Activated B cell treated with CpG ODN at 0.5 μM for 24 hours (primary cell): ENCODE measurements at regions of chr2 and their contacts with region 1.

Region 1: DNA sequence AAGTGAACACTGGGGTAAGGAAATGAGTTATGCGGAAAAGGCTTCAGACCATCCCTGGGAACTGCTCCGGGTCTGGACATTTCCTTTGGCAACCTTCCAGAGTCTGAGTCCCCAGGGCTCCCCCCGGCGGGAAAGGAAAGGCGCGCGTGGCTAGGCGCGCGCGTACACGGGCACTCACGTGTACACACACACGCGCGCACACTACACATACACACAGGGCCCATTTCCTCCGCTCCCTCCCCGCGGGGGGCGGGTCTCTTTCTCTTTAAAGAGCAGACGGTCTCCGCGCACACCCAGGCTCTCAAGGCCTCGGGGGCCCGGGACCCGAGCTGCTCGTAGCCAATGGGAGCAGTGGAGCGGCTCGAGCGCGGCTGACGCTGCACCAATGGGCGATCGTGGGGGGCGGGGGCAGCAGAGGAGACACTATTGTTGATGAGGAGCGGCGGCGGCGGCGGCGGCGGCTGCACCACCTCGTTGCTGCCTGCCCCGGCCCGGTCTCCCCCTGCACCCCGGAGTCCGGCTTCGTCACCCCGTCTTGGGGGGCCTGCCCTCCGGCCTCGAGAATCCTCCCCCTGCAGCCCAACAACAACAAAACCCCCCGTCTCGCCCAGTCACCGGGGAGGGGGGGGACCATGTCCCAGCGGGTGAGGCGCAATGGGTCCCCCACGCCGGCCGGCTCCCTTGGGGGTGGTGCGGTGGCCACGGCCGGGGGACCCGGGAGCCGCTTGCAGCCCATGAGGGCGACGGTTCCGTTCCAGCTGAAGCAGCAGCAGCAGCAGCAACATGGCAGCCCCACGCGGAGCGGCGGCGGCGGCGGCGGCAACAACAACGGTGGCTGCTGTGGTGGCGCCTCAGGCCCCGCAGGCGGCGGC is at the start of gene FAM117B:
- DNase-seq: peak; percentile 92
- ATAC-seq: peak; percentile 88
- H3K4me3 Mint-ChIP-seq: peak within 1 kb of the TSS; percentile 95
- H3K27ac Mint-ChIP-seq: peak within 1 kb of the TSS; percentile 100
- H3K4me1 Mint-ChIP-seq: peaks cover 53% of the 10 kb centered on the region
- H3K27me3 Mint-ChIP-seq: no peaks in the 10 kb centered on the region
- CTCF ChIP-seq: no peak
- total RNA-seq, gene FAM117B: 21.3 and 22.5 TPM in 2 replicates

Region 2: DNA sequence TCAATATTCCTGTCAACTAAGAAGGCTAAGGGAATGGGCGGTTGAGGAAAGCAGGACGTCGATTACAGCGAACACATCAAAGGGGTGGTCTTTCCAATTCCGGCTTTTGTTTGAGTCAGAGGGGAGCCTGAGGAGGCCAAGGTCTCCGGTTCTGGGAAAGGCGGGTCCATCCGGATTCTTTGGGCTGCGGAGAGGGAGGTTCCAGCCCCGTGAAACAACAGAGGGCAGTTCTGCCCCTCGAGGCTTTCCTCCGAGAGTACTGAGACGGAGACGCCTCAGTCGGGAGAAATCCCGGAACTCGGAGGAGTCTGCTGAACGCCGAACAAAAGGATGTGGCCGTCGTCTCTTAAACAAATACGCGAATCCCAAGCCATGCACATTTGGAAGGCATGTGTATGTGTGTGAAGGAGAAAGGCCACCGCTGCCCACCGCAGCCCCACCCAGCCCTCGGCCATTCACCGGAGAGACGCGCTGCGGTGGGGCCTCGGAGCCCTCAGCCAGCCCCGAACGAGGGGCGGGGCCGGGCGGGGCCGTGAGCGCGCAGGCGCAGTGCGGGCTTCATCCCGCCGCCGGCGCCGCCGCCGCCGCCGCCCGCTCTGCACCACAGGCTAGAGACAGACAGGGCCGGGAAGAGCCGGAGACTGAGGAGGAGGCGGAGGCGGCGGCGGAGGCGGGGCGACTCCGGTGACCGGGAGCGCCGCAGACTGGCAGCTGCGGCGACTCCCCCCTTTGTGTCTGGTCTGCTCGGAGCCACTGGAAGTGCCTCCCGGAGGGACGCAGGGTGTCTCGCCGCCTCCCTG is 259.0 kb before region 1 on chr2 and contains the start of gene BMPR2:
- CTCF ChIA-PET with region 1: no interaction called
- POLR2A ChIA-PET with region 1: no interaction called
- intact Hi-C with region 1: loop called (anchors 1 kb)
- DNase-seq: peak; percentile 88
- ATAC-seq: peak; percentile 79
- H3K4me3 Mint-ChIP-seq: peak within 1 kb of the TSS; percentile 98
- H3K27ac Mint-ChIP-seq: peak within 1 kb of the TSS; percentile 87
- H3K4me1 Mint-ChIP-seq: peaks cover 24% of the 10 kb centered on the region
- H3K27me3 Mint-ChIP-seq: no peaks in the 10 kb centered on the region
- CTCF ChIP-seq: no peak
- total RNA-seq, gene BMPR2: 16.5 and 16.8 TPM in 2 replicates

Region 3: DNA sequence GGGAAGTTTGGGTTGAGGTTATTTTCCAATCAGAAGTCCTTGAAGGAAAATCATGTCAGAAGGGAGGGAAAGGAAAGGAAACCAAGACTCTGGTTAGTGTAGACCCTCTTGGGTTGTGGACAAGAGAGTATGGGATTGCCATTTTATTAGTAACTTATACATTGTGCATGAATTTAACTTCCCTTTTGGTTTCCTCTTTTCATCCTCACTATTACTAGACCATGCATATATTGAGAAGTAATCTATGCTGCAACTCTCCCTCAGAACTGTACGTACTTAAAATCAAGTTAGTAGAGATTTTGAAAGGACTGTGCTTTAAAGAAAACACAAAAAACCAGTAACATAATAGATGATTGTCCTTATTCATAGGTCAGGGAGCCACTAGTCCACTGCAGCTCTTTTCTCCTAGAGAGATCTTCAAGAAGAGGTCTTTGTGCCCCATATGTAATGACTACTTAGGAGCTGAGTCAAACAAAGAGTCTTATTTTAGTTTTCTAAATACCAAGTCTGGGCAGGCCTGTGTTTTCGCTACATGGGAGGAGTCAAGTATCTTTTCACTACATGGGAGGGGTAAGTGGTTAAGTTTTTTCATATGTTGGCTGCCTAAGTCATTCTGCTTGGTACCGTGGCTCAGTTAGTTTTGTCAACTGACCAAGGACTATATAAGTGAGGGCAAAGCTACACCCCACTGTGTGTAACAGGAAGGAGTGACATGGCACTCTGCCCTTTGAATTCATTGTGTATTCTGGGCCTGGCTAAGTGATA is 25.2 kb before region 1 on chr2:
- CTCF ChIA-PET with region 1: interaction called, 3 read pairs
- POLR2A ChIA-PET with region 1: interaction called, 67 read pairs
- intact Hi-C with region 1: loop called (anchors 1 kb)
- DNase-seq: no peak
- ATAC-seq: peak; percentile 81
- H3K4me3 Mint-ChIP-seq: peak overlapping the region; percentile 70
- H3K27ac Mint-ChIP-seq: peak overlapping the region; percentile 99
- H3K4me1 Mint-ChIP-seq: peaks cover 39% of the 10 kb centered on the region
- H3K27me3 Mint-ChIP-seq: no peaks in the 10 kb centered on the region
- CTCF ChIP-seq: no peak

Region 4: GRCh38 chr2:202671317-202672035 is 36.7 kb after region 1 on chr2:
- CTCF ChIA-PET with region 1: no interaction called
- POLR2A ChIA-PET with region 1: interaction called, 117 read pairs
- intact Hi-C with region 1: loop called (anchors 1 kb)
- DNase-seq: no peak
- ATAC-seq: no peak
- H3K4me3 Mint-ChIP-seq: no peak overlapping the region
- H3K27ac Mint-ChIP-seq: peak overlapping the region; percentile 87
- H3K4me1 Mint-ChIP-seq: peaks cover 88% of the 10 kb centered on the region
- H3K27me3 Mint-ChIP-seq: no peaks in the 10 kb centered on the region
- CTCF ChIP-seq: no peak

Region 5: DNA sequence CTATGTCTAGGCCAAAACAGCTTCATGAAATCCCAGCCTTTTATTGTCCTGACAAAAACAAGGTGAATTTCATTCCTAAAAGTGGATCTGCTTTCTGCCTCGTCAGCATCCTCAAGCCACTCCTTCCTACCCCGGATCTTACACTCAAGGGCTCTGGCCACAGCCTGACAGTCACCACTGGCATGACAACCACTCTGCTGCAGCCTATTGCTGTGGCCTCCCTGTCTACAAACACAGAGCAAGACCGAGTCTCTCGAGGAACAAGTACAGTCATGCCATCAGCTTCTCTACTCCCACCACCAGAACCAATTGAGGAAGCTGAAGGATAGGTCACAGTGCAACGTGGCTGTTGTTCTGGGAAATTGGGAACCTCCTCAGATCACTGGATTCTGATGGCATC is 130.6 kb after region 1 on chr2:
- CTCF ChIA-PET with region 1: no interaction called
- POLR2A ChIA-PET with region 1: interaction called, 31 read pairs
- intact Hi-C with region 1: no loop called
- DNase-seq: no peak
- ATAC-seq: no peak
- H3K4me3 Mint-ChIP-seq: no peak overlapping the region
- H3K27ac Mint-ChIP-seq: peak overlapping the region; percentile 65
- H3K4me1 Mint-ChIP-seq: peaks cover 24% of the 10 kb centered on the region
- H3K27me3 Mint-ChIP-seq: no peaks in the 10 kb centered on the region
- CTCF ChIP-seq: no peak

Region 6: DNA sequence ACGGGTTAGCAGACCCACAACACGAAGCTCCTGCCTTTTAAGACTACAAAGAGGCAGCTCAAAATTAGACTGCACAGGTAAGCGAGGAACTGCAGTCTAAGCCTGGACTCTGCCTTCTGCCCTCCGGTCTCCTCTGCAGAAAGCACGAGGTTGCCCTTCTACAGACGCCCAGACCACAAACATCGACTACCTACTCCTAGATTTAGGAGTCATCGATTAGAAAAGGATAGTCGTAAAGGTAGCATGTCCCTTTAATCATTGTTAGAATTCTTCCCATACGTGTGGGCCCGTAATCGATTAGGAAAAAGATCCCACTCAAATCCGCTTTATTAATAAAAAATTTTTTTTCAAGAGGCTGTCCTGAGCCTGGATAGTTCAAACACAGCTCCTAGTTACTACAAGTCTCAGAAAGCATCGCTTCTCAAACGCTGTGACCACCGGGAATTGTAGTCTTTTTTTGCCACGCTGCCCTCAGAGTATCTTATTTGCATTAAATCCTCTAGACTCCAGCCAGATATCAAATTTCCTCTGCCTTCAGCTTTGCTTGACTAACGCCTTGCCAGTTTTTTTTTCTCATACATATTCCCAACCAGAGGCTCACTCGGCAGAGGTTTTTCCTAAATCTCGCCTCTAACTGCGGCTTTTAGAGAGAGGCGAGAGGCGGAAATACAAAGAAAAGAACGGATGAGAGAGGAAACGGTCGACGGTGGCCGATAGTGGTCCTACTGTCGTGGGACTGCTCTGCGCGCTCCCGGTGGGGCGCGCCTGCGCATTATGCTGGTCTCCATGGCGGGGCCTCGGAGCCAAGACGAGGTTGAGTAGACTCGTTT is 276.9 kb after region 1 on chr2 and contains the starts of genes CARF and WDR12:
- CTCF ChIA-PET with region 1: no interaction called
- POLR2A ChIA-PET with region 1: interaction called, 8 read pairs
- intact Hi-C with region 1: loop called (anchors 1 kb)
- DNase-seq: peak; percentile 82
- ATAC-seq: peak; percentile 85
- H3K4me3 Mint-ChIP-seq: peak within 1 kb of the TSS; percentile 97
- H3K27ac Mint-ChIP-seq: peak within 1 kb of the TSS; percentile 100
- H3K4me1 Mint-ChIP-seq: peaks cover 29% of the 10 kb centered on the region
- H3K27me3 Mint-ChIP-seq: no peaks in the 10 kb centered on the region
- CTCF ChIP-seq: no peak
- total RNA-seq, gene CARF: 10.6 and 12.0 TPM in 2 replicates
- total RNA-seq, gene WDR12: 57.5 and 63.1 TPM in 2 replicates